HepG2 (cell line): ENCODE measurements at regions of chr6 and their contacts with region 1.

Region 1: DNA sequence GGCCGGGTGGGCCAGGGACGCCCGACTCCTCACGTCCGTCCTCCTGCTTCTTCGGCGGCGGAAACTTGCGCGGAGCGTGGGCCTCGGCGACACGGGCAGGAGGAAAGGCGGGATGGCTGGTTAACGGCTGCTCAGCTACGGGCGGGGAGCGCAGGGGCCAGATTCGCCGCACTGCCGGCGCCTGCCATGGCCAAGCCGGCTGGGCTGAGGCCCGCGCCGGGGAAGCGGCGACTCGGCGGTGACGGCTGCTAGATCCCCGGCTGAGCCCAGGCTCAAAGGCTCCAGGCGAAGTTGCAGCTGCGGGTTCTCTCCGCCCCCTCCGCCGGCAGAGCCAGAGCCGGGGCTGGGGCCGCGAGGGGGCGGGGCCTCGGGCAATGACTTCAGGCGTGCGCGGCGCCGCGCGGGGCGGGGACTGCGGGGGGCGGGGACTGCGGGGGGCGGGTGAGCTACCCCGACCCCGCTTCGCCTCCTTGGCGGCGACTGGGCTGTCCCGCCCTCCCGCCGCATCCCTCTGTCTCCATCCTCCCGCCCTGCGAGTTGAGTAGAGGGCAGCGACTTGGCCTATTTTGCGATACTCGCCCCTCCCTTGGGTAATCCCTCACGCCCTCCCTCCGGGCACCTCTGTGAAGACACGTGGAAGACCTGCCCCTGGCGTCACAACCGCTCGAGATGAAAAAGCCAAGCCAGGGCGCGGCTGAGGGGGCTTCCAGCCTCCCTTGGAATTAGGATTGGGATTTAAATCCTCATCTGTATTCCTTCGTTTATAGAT is at the start of gene CEP85L:
- DNase-seq: peak; percentile 81
- ATAC-seq: peak; percentile 96
- H3K4me3 ChIP-seq: peak within 1 kb of the TSS; percentile 61 to 81 (median 75)
- H3K27ac ChIP-seq: no peak within 1 kb of the TSS
- H3K4me1 ChIP-seq: peaks cover 16% of the 10 kb centered on the region
- H3K27me3 ChIP-seq: peaks cover 0 to 26% of the 10 kb centered on the region in 2 experiments; a peak in 3 of 5 replicates
- CTCF ChIP-seq: peak; percentile 8; the same call in 1 of the 2 replicates
- EP300 ChIP-seq: no peak
- POLR2A ChIP-seq: peak in 1 of 2 experiments; percentile 51; a peak in 1 of 4 replicates
- RAD21 ChIP-seq: no peak
- total RNA-seq, gene CEP85L: 1.4 and 1.7 TPM in 2 replicates

Region 2: DNA sequence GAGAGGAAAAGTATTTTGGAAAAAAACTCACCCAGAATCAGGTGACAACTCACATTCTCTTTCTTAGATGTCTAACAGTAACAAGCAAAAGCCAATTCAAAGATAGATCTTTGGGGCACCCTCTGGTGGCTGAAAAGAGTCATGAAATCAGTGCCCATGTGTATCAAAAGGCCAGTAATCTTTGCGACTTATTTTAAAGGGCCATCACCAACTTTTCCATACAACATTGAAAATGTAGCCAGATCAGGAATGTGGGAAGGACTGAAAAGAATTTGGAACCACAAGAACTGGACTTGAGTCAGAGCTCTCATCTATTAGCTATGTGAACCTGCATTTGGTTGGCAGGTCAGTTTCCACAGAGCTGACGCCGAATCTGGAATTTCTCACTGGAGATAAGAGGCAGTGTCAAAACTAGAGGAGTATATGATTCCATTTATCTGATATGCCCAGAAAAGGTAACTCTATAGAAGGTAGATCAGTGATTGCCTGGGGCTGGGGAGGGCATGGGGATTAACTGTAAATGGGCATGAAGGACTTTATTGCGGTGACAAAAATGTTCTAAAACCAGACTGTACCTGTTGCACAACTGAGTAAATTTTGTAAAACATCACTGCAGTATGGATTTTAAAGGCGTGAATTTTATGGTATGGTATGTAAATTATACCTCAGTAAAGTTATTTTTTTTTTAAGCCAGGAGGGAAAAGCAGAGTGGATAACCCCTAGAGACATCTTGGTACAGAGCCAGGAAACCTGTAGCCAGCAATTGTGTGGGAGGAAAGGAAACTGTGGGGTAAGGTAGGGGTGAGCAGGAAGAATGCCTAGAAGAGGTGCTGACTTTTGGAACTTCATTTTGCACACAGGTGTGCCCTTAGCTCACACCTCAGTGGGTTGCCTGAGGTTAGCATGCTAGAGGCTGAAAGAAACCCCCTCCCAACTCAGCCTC is 125.4 kb after region 1 on chr6:
- CTCF ChIA-PET with region 1: no interaction called
- POLR2A ChIA-PET with region 1: no interaction called
- in situ Hi-C with region 1: no loop called
- intact Hi-C with region 1: loop called (anchors 2 kb)
- DNase-seq: peak; percentile 64
- ATAC-seq: peak; percentile 91
- H3K4me3 ChIP-seq: no peak overlapping the region
- H3K27ac ChIP-seq: no peak overlapping the region
- H3K4me1 ChIP-seq: no peaks in the 10 kb centered on the region
- H3K27me3 ChIP-seq: peaks cover 0 to 10% of the 10 kb centered on the region in 2 experiments; a peak in 3 of 5 replicates
- CTCF ChIP-seq: peak; percentile 70
- EP300 ChIP-seq: no peak
- POLR2A ChIP-seq: no peak
- RAD21 ChIP-seq: peak; percentile 47